ENCODE measurements at regions of chr6 and their contacts with region 1.

Region 1: GRCh38 chr6:42692137-42692911 is 30.1 kb downstream of the PRPH2 start:
- DNase-seq: peak; percentile 64
- ATAC-seq: peak; percentile 79
- H3K4me3 Mint-ChIP-seq: no peak overlapping the region
- H3K27ac Mint-ChIP-seq: peak overlapping the region; percentile 93
- H3K4me1 Mint-ChIP-seq: peaks cover 38% of the 10 kb centered on the region
- H3K27me3 Mint-ChIP-seq: no peaks in the 10 kb centered on the region
- CTCF ChIP-seq: no peak

Region 2: GRCh38 chr6:42661540-42662153 is 30.7 kb before region 1 on chr6:
- CTCF ChIA-PET with region 1: interaction called, 39 read pairs
- POLR2A ChIA-PET with region 1: no interaction called
- intact Hi-C with region 1: no loop called
- DNase-seq: peak; percentile 93
- ATAC-seq: peak; percentile 91
- H3K4me3 Mint-ChIP-seq: no peak overlapping the region
- H3K27ac Mint-ChIP-seq: peak overlapping the region; percentile 37
- H3K4me1 Mint-ChIP-seq: no peaks in the 10 kb centered on the region
- H3K27me3 Mint-ChIP-seq: no peaks in the 10 kb centered on the region
- CTCF ChIP-seq: peak; percentile 91

Region 3: GRCh38 chr6:42845327-42845694 is 153.0 kb after region 1 on chr6:
- CTCF ChIA-PET with region 1: no interaction called
- POLR2A ChIA-PET with region 1: no interaction called
- intact Hi-C with region 1: no loop called
- DNase-seq: no peak
- ATAC-seq: no peak
- H3K4me3 Mint-ChIP-seq: no peak overlapping the region
- H3K27ac Mint-ChIP-seq: no peak overlapping the region
- H3K4me1 Mint-ChIP-seq: peaks cover 14% of the 10 kb centered on the region
- H3K27me3 Mint-ChIP-seq: no peaks in the 10 kb centered on the region
- CTCF ChIP-seq: no peak